ENCODE measurements at regions of chr17 and their contacts with region 1.

Region 1: GRCh38 chr17:79789534-79790353 is 7.1 kb downstream of the CBX8 start:
- DNase-seq: peak; percentile 56
- H3K4me3 ChIP-seq: peak overlapping the region; percentile 21
- H3K27ac ChIP-seq: no peak overlapping the region
- H3K4me1 ChIP-seq: peaks cover 50% of the 10 kb centered on the region
- H3K27me3 ChIP-seq: peaks cover 22% of the 10 kb centered on the region
- CTCF ChIP-seq: peak; percentile 68

Region 2: GRCh38 chr17:79651761-79652160 is 138.0 kb before region 1 on chr17:
- CTCF ChIA-PET with region 1: no interaction called
- POLR2A ChIA-PET with region 1: no interaction called
- intact Hi-C with region 1: no loop called
- DNase-seq: no peak
- H3K4me3 ChIP-seq: no peak overlapping the region
- H3K27ac ChIP-seq: no peak overlapping the region
- H3K4me1 ChIP-seq: no peaks in the 10 kb centered on the region
- H3K27me3 ChIP-seq: peaks cover 69% of the 10 kb centered on the region
- CTCF ChIP-seq: no peak

Region 3: DNA sequence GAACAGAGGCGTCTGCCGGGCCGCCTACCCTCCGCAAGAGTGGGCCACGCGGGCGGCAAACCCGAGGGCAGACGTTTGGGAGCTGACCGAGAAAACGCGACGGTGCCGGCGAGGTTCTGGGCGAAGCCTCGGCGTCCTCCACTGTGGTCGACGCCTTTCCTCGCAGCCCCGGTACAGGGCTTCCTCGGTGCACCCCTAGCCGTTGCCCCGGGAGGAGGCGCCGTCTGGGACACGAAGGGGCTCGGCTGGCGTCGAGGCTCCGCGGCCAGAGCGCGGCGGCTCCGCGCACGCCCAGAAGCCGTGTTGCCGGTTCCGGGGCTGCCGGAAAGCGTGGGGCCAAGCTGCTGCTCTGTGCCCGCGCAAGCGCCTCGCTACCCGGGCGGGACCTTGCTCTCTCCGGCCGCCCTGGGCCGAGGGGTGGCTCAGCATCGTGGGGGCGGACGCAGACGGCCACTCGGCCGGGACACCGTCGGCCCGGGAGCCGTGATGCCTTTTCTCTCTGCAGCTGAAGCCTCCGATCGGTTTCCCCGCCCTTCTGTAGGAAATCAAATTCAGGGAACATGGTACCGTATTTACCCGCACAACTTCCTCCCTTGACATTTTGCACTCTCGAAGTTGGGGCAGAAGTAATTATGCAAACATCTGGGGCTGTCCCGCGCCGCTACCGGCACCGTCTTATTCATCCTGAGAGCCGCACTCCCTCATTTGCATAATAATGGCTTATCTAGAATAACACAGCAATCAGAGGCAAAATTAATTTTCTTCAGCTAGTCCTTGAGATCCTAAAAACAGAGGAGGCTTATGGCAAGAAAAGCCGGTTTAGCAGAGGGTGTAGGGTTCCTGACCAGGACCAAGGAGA is 14.5 kb after region 1 on chr17:
- CTCF ChIA-PET with region 1: no interaction called
- POLR2A ChIA-PET with region 1: no interaction called
- intact Hi-C with region 1: no loop called
- DNase-seq: peak; percentile 67
- H3K4me3 ChIP-seq: peak overlapping the region; percentile 35
- H3K27ac ChIP-seq: peak overlapping the region; percentile 43
- H3K4me1 ChIP-seq: peaks cover 50% of the 10 kb centered on the region
- H3K27me3 ChIP-seq: no peaks in the 10 kb centered on the region
- CTCF ChIP-seq: no peak

Region 4: DNA sequence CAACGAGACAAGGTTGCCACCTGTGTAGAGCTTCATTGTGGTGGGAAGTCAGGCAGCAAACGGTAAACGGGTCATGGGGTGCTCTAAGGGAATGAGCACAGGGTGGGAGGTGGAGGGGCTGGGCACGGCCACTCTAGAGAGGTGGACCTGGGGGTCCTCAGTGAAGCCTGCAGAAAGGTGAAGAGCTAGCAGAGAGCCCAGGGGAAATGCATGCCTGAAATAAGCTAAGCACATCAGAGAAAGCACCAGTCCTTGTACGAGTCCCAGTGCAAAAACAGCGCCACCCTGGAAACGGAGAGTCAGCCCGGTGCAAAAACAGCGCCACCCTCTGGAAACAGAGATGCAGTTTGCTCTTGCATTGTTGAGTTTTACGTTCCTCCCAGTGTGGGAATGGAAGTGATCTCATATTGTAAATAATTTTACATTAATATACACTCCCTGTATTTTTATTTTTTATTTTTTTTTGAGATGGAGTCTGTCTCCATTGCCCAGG is 180.9 kb after region 1 on chr17:
- CTCF ChIA-PET with region 1: interaction called, 3 read pairs
- POLR2A ChIA-PET with region 1: no interaction called
- intact Hi-C with region 1: loop called (anchors 5 kb)
- DNase-seq: peak; percentile 79
- H3K4me3 ChIP-seq: no peak overlapping the region
- H3K27ac ChIP-seq: no peak overlapping the region
- H3K4me1 ChIP-seq: peaks cover 13% of the 10 kb centered on the region
- H3K27me3 ChIP-seq: no peaks in the 10 kb centered on the region
- CTCF ChIP-seq: peak; percentile 76

Region 5: GRCh38 chr17:79991140-79991923 is 201.6 kb after region 1 on chr17:
- CTCF ChIA-PET with region 1: interaction called, 3 read pairs
- POLR2A ChIA-PET with region 1: no interaction called
- intact Hi-C with region 1: loop called (anchors 5 kb)
- DNase-seq: peak; percentile 90
- H3K4me3 ChIP-seq: peak overlapping the region; percentile 48
- H3K27ac ChIP-seq: peak overlapping the region; percentile 67
- H3K4me1 ChIP-seq: peaks cover 41% of the 10 kb centered on the region
- H3K27me3 ChIP-seq: no peaks in the 10 kb centered on the region
- CTCF ChIP-seq: peak; percentile 59